Activated naive CD4-positive, alpha-beta T cell treated with anti-CD3 and anti-CD28 coated beads for 36 hours (primary cell): ENCODE measurements at regions of chr11 and their contacts with region 1.

Region 1: DNA sequence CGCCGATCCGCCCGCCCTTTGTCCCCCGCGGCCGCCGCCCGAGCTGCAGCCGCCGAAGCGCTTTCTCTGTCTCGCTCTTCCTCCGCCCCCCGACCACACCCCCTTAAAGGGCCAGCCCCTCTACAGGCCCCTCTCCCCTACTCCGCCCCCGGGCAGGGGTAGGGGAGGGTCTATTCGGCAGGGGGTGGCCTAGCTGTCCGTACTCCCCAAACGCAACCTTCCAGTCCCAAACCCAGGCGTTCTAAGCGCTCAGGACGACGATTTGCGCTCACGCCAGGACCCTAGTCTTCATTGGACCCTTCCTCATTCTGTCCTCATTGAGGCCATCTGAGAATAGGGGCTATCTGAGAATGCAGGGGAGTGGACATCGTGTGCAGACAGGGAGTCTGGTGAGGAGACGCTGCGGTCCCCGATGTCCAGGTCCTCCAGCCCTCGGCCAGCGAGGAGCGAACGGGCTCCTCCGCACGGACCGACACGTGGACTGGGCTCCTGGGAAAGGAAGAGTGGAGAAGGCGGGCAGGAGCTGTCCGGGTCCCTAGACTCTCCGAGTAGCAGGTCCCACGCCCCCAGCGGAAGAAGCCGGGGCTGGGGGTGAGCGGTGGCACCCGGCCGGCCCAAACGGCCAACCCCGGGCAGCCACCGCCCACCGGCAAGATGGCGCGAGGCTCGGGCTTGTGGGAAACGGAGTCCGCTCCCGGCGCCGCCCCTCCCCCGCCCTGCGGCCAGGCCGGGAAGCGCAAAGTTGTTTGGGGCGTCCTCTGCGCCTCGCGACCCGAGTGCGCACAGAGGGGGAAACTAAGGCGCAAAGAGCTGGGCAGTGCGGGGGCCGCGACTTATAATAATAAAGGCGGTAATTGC is at the start of gene PPP1R14B:
- DNase-seq: peak; percentile 80
- H3K4me3 Mint-ChIP-seq: peak within 1 kb of the TSS; percentile 95
- H3K27ac Mint-ChIP-seq: peak within 1 kb of the TSS; percentile 91
- H3K4me1 Mint-ChIP-seq: peaks cover 29% of the 10 kb centered on the region
- H3K27me3 Mint-ChIP-seq: no peaks in the 10 kb centered on the region
- total RNA-seq, gene PPP1R14B: 216 to 227 TPM

Region 2: DNA sequence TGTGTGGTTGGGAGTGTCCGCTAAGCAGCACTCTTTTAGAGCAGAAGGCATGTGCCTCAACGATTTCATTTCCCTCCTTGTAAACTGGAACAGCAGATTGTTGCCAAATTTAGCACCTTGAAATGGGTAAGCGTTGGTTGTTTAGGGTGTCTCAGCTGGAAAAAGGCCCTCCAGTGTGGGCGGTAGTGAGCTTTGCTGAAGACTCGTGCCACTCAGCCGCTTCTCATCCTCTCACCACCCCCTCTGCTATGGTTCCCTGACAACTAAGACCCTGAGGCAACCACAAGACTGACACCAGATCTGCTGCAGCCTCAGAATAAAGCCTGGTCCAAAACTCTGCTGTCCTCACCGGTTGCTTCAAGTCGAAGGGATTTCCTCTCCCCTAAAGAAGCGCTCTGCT is 50.5 kb before region 1 on chr11:
- CTCF ChIA-PET with region 1: no interaction called
- intact Hi-C with region 1: no loop called
- DNase-seq: no peak
- H3K4me3 Mint-ChIP-seq: no peak overlapping the region
- H3K27ac Mint-ChIP-seq: no peak overlapping the region
- H3K4me1 Mint-ChIP-seq: peaks cover 14% of the 10 kb centered on the region
- H3K27me3 Mint-ChIP-seq: no peaks in the 10 kb centered on the region

Region 3: GRCh38 chr11:64225612-64226506 is 21.2 kb before region 1 on chr11 and contains the starts of genes NUDT22 and TRPT1:
- CTCF ChIA-PET with region 1: interaction called, 5 read pairs
- intact Hi-C with region 1: loop called (anchors 2 kb)
- DNase-seq: peak; percentile 94
- H3K4me3 Mint-ChIP-seq: peak within 1 kb of the TSS; percentile 87
- H3K27ac Mint-ChIP-seq: peak within 1 kb of the TSS; percentile 90
- H3K4me1 Mint-ChIP-seq: peaks cover 34% of the 10 kb centered on the region
- H3K27me3 Mint-ChIP-seq: no peaks in the 10 kb centered on the region
- total RNA-seq, gene NUDT22: 51.4 to 51.9 TPM
- total RNA-seq, gene TRPT1: 18.2 to 18.3 TPM

Region 4: GRCh38 chr11:64284048-64284961 is 37.2 kb after region 1 on chr11 and contains the start of gene BAD:
- CTCF ChIA-PET with region 1: interaction called, 3 read pairs
- intact Hi-C with region 1: loop called (anchors 1 kb)
- DNase-seq: peak; percentile 95
- H3K4me3 Mint-ChIP-seq: peak within 1 kb of the TSS; percentile 82
- H3K27ac Mint-ChIP-seq: peak within 1 kb of the TSS; percentile 90
- H3K4me1 Mint-ChIP-seq: peaks cover 17% of the 10 kb centered on the region
- H3K27me3 Mint-ChIP-seq: no peaks in the 10 kb centered on the region
- total RNA-seq, gene BAD: 12.8 to 14.3 TPM

Region 5: GRCh38 chr11:64317325-64317956 is 70.3 kb after region 1 on chr11 and contains the start of gene TRMT112:
- CTCF ChIA-PET with region 1: no interaction called
- intact Hi-C with region 1: no loop called
- DNase-seq: peak; percentile 98
- H3K4me3 Mint-ChIP-seq: peak within 1 kb of the TSS; percentile 94
- H3K27ac Mint-ChIP-seq: peak within 1 kb of the TSS; percentile 99
- H3K4me1 Mint-ChIP-seq: peaks cover 37% of the 10 kb centered on the region
- H3K27me3 Mint-ChIP-seq: no peaks in the 10 kb centered on the region
- total RNA-seq, gene TRMT112: 241 to 261 TPM